ENCODE measurements at regions of chr10 and their contacts with region 1.

Region 1: DNA sequence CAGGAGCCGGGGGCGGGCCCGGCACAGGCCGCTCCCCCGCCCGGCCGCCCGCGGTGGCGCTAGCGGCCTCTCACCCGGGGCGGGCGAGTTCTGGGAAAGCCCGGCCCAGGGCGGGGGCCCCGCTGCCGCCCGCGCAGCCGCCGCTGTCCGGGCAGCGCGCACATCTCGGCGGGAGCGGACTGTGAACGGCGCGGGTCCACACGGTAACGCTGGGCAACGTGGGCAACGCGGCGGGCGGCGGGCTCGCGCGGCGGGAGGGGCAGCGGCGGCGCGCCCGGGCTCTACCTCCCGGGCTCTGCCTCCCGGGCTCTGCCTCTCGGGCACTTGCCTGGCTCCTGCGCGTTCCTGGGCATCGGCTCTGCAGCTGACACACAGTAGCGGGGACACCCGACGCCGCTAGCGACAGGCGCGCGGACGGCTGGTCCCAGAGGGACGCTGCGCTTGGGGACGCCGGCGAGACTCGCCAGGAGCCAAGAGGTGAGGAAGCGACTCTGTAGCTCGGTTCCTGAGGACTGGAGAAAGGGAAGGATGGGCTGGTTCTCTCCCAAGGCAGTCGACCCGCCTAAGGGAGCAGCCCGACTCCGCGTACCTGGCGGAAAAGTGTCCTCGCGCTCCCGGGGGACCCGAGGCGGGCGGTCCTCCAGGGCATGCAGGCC is at the start of gene PLCE1:
- DNase-seq: peak; percentile 46 to 48
- ATAC-seq: peak; percentile 63 to 91 (median 78)
- H3K4me3 ChIP-seq: peak within 1 kb of the TSS; percentile 35 to 80 (median 62)
- H3K27ac ChIP-seq: peak within 1 kb of the TSS in 8 of 10 donors; percentile 19 to 86 (median 69)
- H3K4me1 ChIP-seq: peaks cover 0 to 53% (median 21%) of the 10 kb centered on the region in 9 donors
- H3K27me3 ChIP-seq: peaks cover 0 to 55% (median 0%) of the 10 kb centered on the region in 7 donors
- CTCF ChIP-seq: no peak
- total RNA-seq, gene PLCE1: 1.7 to 62.0 (median 13.8) TPM

Region 2: DNA sequence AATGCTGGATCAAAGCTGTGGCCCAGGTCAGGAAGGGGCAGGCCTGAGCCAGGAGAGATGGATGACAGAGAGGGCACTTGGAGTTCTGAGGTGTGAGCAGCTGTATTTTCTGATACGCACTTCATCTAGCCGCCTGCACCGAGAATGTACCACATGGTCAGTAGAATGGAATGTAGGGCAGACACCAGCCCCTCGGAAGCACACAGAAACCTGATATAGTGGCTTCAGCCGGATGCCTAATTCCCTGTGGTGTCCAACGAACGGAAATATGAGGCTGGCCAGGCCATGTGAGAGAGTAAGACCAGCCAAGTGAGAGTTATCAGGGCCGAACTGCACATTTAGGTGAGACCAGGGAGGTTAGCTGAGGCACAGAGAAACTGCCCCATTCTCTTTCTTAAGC is 46.9 kb before region 1 on chr10:
- intact Hi-C with region 1: loop called in 2 of 10 experiments (anchors 5 kb)
- DNase-seq: peak in 1 of 2 donors; percentile 70
- ATAC-seq: peak; percentile 79 to 95 (median 92)
- H3K4me3 ChIP-seq: no peak overlapping the region
- H3K27ac ChIP-seq: peak overlapping the region in 8 of 10 donors; percentile 40 to 88 (median 77)
- H3K4me1 ChIP-seq: peaks cover 0 to 47% (median 27%) of the 10 kb centered on the region in 9 donors
- H3K27me3 ChIP-seq: no peaks in the 10 kb centered on the region
- CTCF ChIP-seq: no peak

Region 3: DNA sequence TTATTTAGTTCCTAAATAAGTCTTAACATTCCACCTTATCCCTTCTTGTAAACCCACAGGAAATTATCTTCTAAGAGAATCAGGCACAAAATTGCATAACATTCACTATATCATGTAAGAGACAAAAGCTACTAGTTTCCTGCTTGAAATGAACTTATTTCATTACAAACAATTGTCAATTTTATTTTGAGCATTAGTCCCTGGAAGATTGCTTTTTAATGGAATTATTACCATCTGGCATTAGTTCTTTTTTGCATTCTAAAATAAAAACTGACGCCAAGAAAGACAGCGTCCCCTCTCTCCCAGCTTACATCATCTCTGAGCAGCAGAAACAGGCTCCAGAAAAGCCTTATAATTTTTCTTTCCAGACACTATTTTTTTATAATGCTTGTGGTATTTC is 247.0 kb after region 1 on chr10:
- intact Hi-C with region 1: no loop called
- DNase-seq: no peak
- ATAC-seq: no peak
- H3K4me3 ChIP-seq: no peak overlapping the region
- H3K27ac ChIP-seq: peak overlapping the region in 1 of 10 donors; percentile 8
- H3K4me1 ChIP-seq: peaks cover 0 to 5% (median 0%) of the 10 kb centered on the region in 9 donors
- H3K27me3 ChIP-seq: no peaks in the 10 kb centered on the region
- CTCF ChIP-seq: no peak